ENCODE measurements at regions of chr9 and their contacts with region 1.

Region 1: GRCh38 chr9:4077499-4078102 is 222.3 kb downstream of the GLIS3 start:
- DNase-seq: peak; percentile 48
- ATAC-seq: peak; percentile 89
- H3K4me3 ChIP-seq: no peak overlapping the region
- H3K27ac ChIP-seq: no peak overlapping the region
- H3K4me1 ChIP-seq: peaks cover 0 to 8% of the 10 kb centered on the region in 2 experiments; a peak in 2 of 4 replicates
- H3K27me3 ChIP-seq: no peaks in the 10 kb centered on the region
- CTCF ChIP-seq: peak; percentile 78 to 93 (median 93)
- POLR2A ChIP-seq: no peak
- RAD21 ChIP-seq: peak; percentile 77

Region 2: GRCh38 chr9:4228606-4229005 is 151.0 kb after region 1 on chr9:
- CTCF ChIA-PET with region 1: interaction called, 19 read pairs
- POLR2A ChIA-PET with region 1: no interaction called
- RAD21 ChIA-PET with region 1: no interaction called
- intact Hi-C with region 1: loop called (anchors 5 kb)
- DNase-seq: no peak
- ATAC-seq: peak; percentile 77
- H3K4me3 ChIP-seq: no peak overlapping the region
- H3K27ac ChIP-seq: no peak overlapping the region
- H3K4me1 ChIP-seq: peaks cover 0 to 39% of the 10 kb centered on the region in 2 experiments; a peak in 2 of 4 replicates
- H3K27me3 ChIP-seq: no peaks in the 10 kb centered on the region
- CTCF ChIP-seq: peak; percentile 40 to 64 (median 50); a peak in 5 of 6 replicates
- POLR2A ChIP-seq: no peak
- RAD21 ChIP-seq: peak; percentile 62

Region 3: DNA sequence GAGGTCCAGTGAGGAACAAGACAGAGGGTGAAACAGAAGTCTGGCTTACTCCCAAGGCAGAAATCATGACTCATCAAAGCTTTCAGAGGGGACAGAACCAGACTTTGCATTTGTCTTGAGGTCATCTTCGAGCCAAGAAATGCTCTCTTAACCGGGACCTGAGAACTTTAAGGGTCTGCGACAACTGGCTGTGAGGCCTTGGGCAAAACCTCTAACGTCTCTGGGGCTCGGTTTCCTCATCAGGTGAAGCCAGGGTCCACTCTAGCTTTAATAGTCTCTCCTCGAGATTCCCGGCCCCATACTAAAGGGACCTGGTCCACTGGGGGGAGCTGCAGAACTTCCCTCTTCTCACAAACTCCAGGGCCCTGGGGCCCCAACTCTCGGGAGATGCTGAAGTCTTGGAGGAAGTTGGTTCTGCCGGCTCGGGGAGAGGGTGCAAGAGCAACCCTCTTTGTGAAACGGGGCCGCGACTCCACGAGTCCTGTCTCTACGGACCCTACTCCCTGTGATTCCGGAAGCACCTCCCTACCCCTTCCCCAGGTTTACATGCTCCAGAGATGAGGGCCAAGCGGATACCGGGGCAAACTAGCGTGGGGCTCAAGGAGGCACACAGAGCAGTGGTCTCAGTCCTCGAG is 219.7 kb after region 1 on chr9:
- CTCF ChIA-PET with region 1: no interaction called
- POLR2A ChIA-PET with region 1: no interaction called
- RAD21 ChIA-PET with region 1: no interaction called
- intact Hi-C with region 1: loop called (anchors 5 kb)
- DNase-seq: peak; percentile 79
- ATAC-seq: peak; percentile 67
- H3K4me3 ChIP-seq: peak overlapping the region; percentile 71 to 73
- H3K27ac ChIP-seq: peak overlapping the region; percentile 75
- H3K4me1 ChIP-seq: peaks cover 18 to 80% of the 10 kb centered on the region in 2 experiments
- H3K27me3 ChIP-seq: no peaks in the 10 kb centered on the region
- CTCF ChIP-seq: peak; percentile 24 to 57 (median 55); a peak in 5 of 6 replicates
- POLR2A ChIP-seq: no peak
- RAD21 ChIP-seq: peak; percentile 56

Measured in HCT116 (cell line).